ENCODE measurements at regions of chr2 and their contacts with region 1.

Region 1: DNA sequence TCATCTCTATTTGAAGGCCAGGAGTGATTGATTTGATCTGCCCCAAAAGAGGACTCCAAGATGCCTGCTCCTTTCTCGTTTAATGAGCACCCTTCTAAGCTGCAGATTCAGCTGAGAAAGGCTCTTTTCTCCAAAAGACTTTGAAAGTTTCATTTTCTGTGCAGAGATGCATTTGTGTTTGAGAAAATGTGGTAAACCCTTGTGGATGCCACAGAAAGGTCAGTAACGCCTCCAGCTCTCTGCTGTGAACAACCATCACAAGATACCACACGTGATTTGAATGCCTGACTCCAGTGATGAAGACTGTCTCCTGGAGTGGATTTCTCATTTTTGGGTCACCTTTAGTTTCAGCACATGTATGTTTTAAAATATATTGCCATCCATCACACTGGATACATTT is 35.0 kb upstream of the CCDC85A start:
- DNase-seq: no peak
- H3K4me3 ChIP-seq: no peak overlapping the region
- H3K4me3 Mint-ChIP-seq: no peak overlapping the region
- H3K27ac ChIP-seq: no peak overlapping the region
- H3K27ac Mint-ChIP-seq: no peak overlapping the region
- H3K4me1 ChIP-seq: no peaks in the 10 kb centered on the region
- H3K4me1 Mint-ChIP-seq: no peaks in the 10 kb centered on the region
- H3K27me3 ChIP-seq: no peaks in the 10 kb centered on the region
- H3K27me3 Mint-ChIP-seq: peaks cover 0 to 3% (median 0%) of the 10 kb centered on the region in 3 donors
- CTCF ChIP-seq: no peak

Region 2: GRCh38 chr2:54271843-54272627 is 1876.8 kb before region 1 on chr2:
- intact Hi-C with region 1: loop called in 1 of 2 experiments (anchors 10 kb)
- DNase-seq: peak in 2 of 3 donors; percentile 2 to 3
- H3K4me3 ChIP-seq: no peak overlapping the region
- H3K4me3 Mint-ChIP-seq: no peak overlapping the region
- H3K27ac ChIP-seq: no peak overlapping the region
- H3K27ac Mint-ChIP-seq: no peak overlapping the region
- H3K4me1 ChIP-seq: no peaks in the 10 kb centered on the region
- H3K4me1 Mint-ChIP-seq: no peaks in the 10 kb centered on the region
- H3K27me3 ChIP-seq: no peaks in the 10 kb centered on the region
- H3K27me3 Mint-ChIP-seq: peaks cover 0 to 1% (median 0%) of the 10 kb centered on the region in 3 donors
- CTCF ChIP-seq: no peak

Region 3: DNA sequence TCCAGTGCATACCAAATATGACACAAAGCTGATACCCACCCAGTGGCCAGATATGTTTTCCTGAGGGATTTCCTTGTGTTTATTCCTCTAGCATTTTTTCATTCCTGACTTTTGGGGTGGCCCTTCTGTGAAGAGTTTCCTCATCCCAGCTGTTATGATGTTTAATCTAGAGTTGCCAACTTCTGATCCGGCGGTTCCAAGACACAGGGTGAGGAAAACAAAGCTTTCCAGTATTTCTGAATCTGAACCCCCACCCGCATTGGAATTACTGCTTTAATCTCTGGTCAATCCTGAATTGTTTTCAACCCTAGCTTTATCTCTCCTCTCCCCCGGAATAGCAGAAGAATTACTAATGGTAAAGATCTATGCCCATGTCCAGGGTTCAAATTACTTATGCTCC is 416.0 kb before region 1 on chr2:
- intact Hi-C with region 1: no loop called
- DNase-seq: no peak
- H3K4me3 ChIP-seq: no peak overlapping the region
- H3K4me3 Mint-ChIP-seq: no peak overlapping the region
- H3K27ac ChIP-seq: no peak overlapping the region
- H3K27ac Mint-ChIP-seq: no peak overlapping the region
- H3K4me1 ChIP-seq: no peaks in the 10 kb centered on the region
- H3K4me1 Mint-ChIP-seq: no peaks in the 10 kb centered on the region
- H3K27me3 ChIP-seq: no peaks in the 10 kb centered on the region
- H3K27me3 Mint-ChIP-seq: peaks cover 0 to 3% (median 2%) of the 10 kb centered on the region in 3 donors
- CTCF ChIP-seq: no peak

Region 4: DNA sequence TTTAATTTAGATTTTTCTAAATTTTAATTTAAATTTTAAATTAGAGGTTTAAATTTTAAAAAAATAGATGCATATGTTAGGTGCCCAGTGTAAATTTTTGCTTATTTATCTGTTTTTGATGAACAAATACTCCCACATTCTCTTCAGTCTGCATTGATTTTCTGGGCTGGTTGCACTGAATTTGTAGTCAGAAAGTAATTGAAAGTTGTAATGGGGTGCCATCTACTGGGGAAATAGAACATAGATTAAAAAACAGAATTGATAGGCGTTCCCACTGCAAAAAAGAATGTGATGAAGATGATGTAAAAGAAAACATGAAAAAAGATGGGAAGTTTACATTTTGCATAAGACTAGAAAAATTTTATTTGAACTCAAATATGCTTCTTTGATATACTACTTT is 16.7 kb before region 1 on chr2:
- intact Hi-C with region 1: no loop called
- DNase-seq: no peak
- H3K4me3 ChIP-seq: no peak overlapping the region
- H3K4me3 Mint-ChIP-seq: no peak overlapping the region
- H3K27ac ChIP-seq: no peak overlapping the region
- H3K27ac Mint-ChIP-seq: no peak overlapping the region
- H3K4me1 ChIP-seq: no peaks in the 10 kb centered on the region
- H3K4me1 Mint-ChIP-seq: no peaks in the 10 kb centered on the region
- H3K27me3 ChIP-seq: no peaks in the 10 kb centered on the region
- H3K27me3 Mint-ChIP-seq: peaks cover 1% of the 10 kb centered on the region in 3 donors
- CTCF ChIP-seq: peak; percentile 20

Measured in CD14-positive monocyte (primary cell).